Testis (tissue), 5 donors: ENCODE measurements at regions of chr1 and their contacts with region 1.

Region 1: GRCh38 chr1:11805447-11806306 is at the starts of genes CLCN6 and MTHFR:
- DNase-seq: peak; percentile 100
- H3K4me3 ChIP-seq: peak within 1 kb of the TSS; percentile 67 to 69
- H3K27ac ChIP-seq: peak within 1 kb of the TSS; percentile 95 to 98
- H3K4me1 ChIP-seq: peaks cover 24% of the 10 kb centered on the region
- H3K27me3 ChIP-seq: no peaks in the 10 kb centered on the region
- CTCF ChIP-seq: peak in 1 of 3 experiments; percentile 9
- POLR2A ChIP-seq: peak; percentile 87
- total RNA-seq, gene CLCN6: 57.1 to 91.7 TPM
- total RNA-seq, gene MTHFR: 68.3 to 78.3 TPM

Region 2: DNA sequence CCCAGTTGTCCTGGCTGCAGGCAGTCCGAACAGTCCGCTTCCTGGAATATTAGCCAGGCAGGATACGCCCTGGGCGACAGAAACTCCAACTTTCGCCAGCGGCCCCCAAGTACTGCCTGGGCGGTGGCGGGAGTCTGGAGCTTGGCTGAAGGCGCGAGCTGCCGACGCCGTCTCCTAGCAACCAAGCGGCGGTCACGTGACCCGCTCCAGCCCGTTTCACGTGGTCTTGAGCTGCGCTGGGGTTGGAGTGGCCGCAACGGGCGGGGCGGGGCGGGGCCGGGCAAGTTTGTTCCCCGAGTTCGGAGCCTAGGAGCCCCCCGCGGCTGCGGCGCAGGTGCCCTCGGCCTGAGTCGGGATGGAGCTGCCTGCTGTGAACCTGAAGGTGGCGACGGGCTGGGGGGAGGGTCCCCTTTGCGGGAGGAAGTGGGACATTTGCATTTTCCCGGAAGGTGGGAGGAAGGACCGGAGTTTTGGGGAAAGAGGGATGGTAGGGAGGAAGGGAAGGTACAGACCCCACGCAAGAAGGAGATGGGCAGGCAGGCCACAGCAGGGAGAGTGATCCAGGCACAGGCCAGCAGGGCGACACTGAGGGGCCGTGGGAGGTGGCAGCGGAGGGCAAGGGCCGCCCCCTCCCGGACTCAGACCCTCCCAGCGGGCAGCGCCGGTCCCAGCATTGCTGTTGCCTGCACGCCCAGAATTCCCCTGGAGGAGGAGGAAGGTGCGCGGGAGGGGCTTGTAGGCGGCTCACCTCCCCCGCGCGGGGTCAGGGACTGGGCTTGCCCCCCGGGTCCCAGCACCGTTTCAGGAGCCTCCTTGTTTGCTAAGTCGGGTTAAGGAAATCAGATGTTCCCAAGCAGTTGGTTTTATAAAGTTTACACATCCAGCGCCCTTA is 69.6 kb before region 1 on chr1 and contains the start of gene AGTRAP:
- intact Hi-C with region 1: loop called (anchors 10 kb)
- DNase-seq: peak; percentile 97
- H3K4me3 ChIP-seq: peak within 1 kb of the TSS; percentile 83 to 87
- H3K27ac ChIP-seq: peak within 1 kb of the TSS; percentile 74 to 90
- H3K4me1 ChIP-seq: peaks cover 35% of the 10 kb centered on the region
- H3K27me3 ChIP-seq: no peaks in the 10 kb centered on the region
- CTCF ChIP-seq: no peak
- POLR2A ChIP-seq: no peak
- total RNA-seq, gene AGTRAP: 64.1 to 75.3 TPM